Gastrocnemius medialis (tissue), 4 donors: ENCODE measurements at regions of chr12 and their contacts with region 1.

Region 1: GRCh38 chr12:11648831-11649702 is at the start of gene ETV6:
- DNase-seq: peak; percentile 60 to 61
- ATAC-seq: peak; percentile 80 to 81
- H3K4me3 ChIP-seq: peak within 1 kb of the TSS; percentile 92 to 96 (median 92)
- H3K27ac ChIP-seq: peak within 1 kb of the TSS; percentile 84 to 97 (median 92)
- H3K4me1 ChIP-seq: peaks cover 32 to 37% of the 10 kb centered on the region in 2 donors
- H3K27me3 ChIP-seq: no peaks in the 10 kb centered on the region
- CTCF ChIP-seq: peak in 1 of 5 experiments; percentile 16
- POLR2A ChIP-seq: peak; percentile 47 to 71
- total RNA-seq, gene ETV6: 2.8 to 5.9 (median 3.3) TPM

Region 2: GRCh38 chr12:11500178-11500860 is 148.7 kb before region 1 on chr12:
- in situ Hi-C with region 1: no loop called
- intact Hi-C with region 1: no loop called
- DNase-seq: peak; percentile 21 to 23
- ATAC-seq: no peak
- H3K4me3 ChIP-seq: no peak overlapping the region
- H3K27ac ChIP-seq: no peak overlapping the region
- H3K4me1 ChIP-seq: no peaks in the 10 kb centered on the region
- H3K27me3 ChIP-seq: no peaks in the 10 kb centered on the region
- CTCF ChIP-seq: no peak
- POLR2A ChIP-seq: no peak

Region 3: GRCh38 chr12:11553871-11554533 is 95.1 kb before region 1 on chr12:
- in situ Hi-C with region 1: no loop called
- intact Hi-C with region 1: no loop called
- DNase-seq: no peak
- ATAC-seq: no peak
- H3K4me3 ChIP-seq: no peak overlapping the region
- H3K27ac ChIP-seq: no peak overlapping the region
- H3K4me1 ChIP-seq: no peaks in the 10 kb centered on the region
- H3K27me3 ChIP-seq: no peaks in the 10 kb centered on the region
- CTCF ChIP-seq: peak in 2 of 5 experiments; percentile 22 to 51
- POLR2A ChIP-seq: no peak

Region 4: GRCh38 chr12:11581179-11581755 is 67.8 kb before region 1 on chr12:
- in situ Hi-C with region 1: no loop called
- intact Hi-C with region 1: loop called (anchors 5 kb)
- DNase-seq: peak; percentile 23 to 24
- ATAC-seq: peak in 1 of 2 donors; percentile 36
- H3K4me3 ChIP-seq: no peak overlapping the region
- H3K27ac ChIP-seq: no peak overlapping the region
- H3K4me1 ChIP-seq: no peaks in the 10 kb centered on the region
- H3K27me3 ChIP-seq: peaks cover 0 to 3% (median 0%) of the 10 kb centered on the region in 3 donors
- CTCF ChIP-seq: peak; percentile 62 to 78 (median 71)
- POLR2A ChIP-seq: no peak

Region 5: DNA sequence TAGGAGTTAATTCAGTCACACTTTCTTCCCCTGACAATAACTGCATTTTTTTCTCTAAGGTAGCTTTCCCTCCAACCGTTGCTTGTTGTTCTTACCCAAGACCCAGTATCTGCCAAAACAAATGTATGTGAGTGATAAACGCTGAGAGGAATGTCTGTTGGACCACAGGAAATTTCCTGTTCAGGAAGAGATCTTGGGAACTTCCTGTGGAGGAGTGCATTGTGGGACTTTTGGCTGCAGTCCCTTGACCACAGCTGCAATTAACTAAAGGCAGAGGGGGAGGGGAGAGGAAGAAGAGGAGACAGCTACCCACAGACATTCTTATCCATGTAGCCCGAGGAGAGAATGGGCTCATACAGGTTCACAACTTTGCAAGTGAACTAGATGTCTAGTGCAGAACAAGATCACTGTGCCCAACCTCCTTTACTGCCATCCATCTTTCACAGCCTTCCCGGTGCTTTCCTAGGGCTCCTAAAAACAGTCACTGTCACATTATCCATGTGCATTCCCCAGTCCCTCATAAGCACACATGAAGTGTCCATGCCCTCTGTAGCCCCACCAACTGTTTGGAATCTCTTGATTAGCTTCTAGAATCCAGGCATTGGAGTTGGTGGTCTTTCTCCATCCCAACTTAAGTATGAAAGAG is 149.9 kb after region 1 on chr12:
- in situ Hi-C with region 1: no loop called
- intact Hi-C with region 1: loop called (anchors 2 kb)
- DNase-seq: no peak
- ATAC-seq: no peak
- H3K4me3 ChIP-seq: no peak overlapping the region
- H3K27ac ChIP-seq: peak overlapping the region in 1 of 4 donors; percentile 85
- H3K4me1 ChIP-seq: peaks cover 45 to 46% of the 10 kb centered on the region in 2 donors
- H3K27me3 ChIP-seq: no peaks in the 10 kb centered on the region
- CTCF ChIP-seq: no peak
- POLR2A ChIP-seq: no peak

Region 6: GRCh38 chr12:12266873-12267741 is 618.0 kb after region 1 on chr12 and contains the start of gene LRP6:
- in situ Hi-C with region 1: no loop called
- intact Hi-C with region 1: loop called (anchors 10 kb)
- DNase-seq: peak; percentile 76 to 84
- ATAC-seq: peak; percentile 93 to 94
- H3K4me3 ChIP-seq: peak within 1 kb of the TSS; percentile 76 to 96 (median 86)
- H3K27ac ChIP-seq: peak within 1 kb of the TSS; percentile 90 to 99 (median 98)
- H3K4me1 ChIP-seq: peaks cover 18 to 21% of the 10 kb centered on the region in 2 donors
- H3K27me3 ChIP-seq: no peaks in the 10 kb centered on the region
- CTCF ChIP-seq: peak in 3 of 5 experiments; percentile 21 to 37 (median 32)
- POLR2A ChIP-seq: peak; percentile 68 to 81
- total RNA-seq, gene LRP6: 9.5 to 21.4 (median 14.7) TPM